PC-9 (cell line): ENCODE measurements at regions of chr16 and their contacts with region 1.

Region 1: DNA sequence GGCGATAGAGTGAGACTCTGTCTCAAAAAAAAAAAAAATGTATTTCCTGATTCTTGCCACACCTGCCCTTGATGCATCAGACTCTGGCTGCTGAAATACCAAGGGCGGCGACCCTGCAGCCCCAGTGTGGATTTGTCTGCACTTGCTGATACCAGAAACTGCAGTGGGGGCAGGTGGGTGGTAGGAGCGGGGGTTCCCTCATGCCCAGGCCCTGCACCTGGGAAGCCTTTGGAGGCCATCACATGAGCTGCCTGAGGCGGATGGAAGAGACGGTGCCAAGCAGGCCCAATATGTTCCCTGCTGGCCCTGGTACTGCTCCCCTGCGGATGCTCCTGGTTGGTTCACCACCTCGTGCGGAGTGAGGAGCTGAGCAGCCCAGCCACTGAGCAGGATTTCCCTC is 50.6 kb downstream of the MARF1 start:
- DNase-seq: peak in 1 of 2 experiments; percentile 40
- H3K4me3 ChIP-seq: no peak overlapping the region
- H3K27ac ChIP-seq: peak overlapping the region; percentile 99
- H3K4me1 ChIP-seq: peaks cover 43% of the 10 kb centered on the region
- H3K27me3 ChIP-seq: no peaks in the 10 kb centered on the region
- CTCF ChIP-seq: no peak

Region 2: GRCh38 chr16:15482068-15482747 is 110.1 kb before region 1 on chr16:
- CTCF ChIA-PET with region 1: interaction called, 3 read pairs
- POLR2A ChIA-PET with region 1: no interaction called
- intact Hi-C with region 1: loop called (anchors 2 kb)
- DNase-seq: peak; percentile 89 to 98
- H3K4me3 ChIP-seq: no peak overlapping the region
- H3K27ac ChIP-seq: peak overlapping the region; percentile 69
- H3K4me1 ChIP-seq: peaks cover 35% of the 10 kb centered on the region
- H3K27me3 ChIP-seq: no peaks in the 10 kb centered on the region
- CTCF ChIP-seq: no peak; the same call in 1 of the 2 replicates

Region 3: DNA sequence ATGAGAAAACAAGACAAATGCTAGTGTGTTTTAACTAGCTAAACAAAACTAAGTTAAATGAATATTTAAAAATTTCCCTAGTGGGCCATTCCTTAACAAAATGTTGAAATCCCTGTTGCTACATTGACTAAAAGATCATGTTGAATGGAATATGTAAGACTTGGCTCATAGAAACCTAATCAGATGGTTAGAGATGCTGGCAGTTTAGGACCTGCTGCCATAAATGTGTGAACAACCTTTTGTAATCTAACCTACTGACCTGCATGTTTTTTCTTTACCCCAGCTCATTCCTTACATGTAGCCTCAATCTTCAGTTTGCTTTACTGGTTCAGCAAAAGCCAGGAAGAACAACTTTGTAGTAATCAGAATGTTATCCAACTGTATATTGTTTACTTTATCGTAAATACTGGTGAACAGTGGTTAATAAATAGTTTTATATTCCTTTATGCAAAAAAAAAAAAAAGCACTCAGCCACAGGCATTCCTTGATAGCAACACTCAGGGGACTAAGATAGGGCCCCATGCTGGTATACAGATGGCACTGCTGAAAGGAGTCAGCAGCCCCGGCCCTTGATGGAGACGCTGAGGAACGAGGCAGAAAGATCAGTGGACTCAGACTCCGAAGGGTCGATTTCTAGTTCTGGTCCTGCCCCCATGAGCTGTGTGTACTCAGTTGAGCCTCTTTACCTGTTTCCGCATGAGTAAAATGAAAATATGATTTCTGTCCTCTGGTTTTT is 27.6 kb before region 1 on chr16:
- CTCF ChIA-PET with region 1: no interaction called
- POLR2A ChIA-PET with region 1: no interaction called
- intact Hi-C with region 1: no loop called
- DNase-seq: no peak
- H3K4me3 ChIP-seq: no peak overlapping the region
- H3K27ac ChIP-seq: no peak overlapping the region
- H3K4me1 ChIP-seq: no peaks in the 10 kb centered on the region
- H3K27me3 ChIP-seq: no peaks in the 10 kb centered on the region
- CTCF ChIP-seq: no peak

Region 4: GRCh38 chr16:15613676-15614075 is 21.4 kb after region 1 on chr16:
- CTCF ChIA-PET with region 1: no interaction called
- POLR2A ChIA-PET with region 1: interaction called, 6 read pairs
- intact Hi-C with region 1: loop called (anchors 2 kb)
- DNase-seq: peak; percentile 60 to 91
- H3K4me3 ChIP-seq: peak overlapping the region; percentile 45; the same call in 1 of the 2 replicates
- H3K27ac ChIP-seq: peak overlapping the region; percentile 98
- H3K4me1 ChIP-seq: peaks cover 37% of the 10 kb centered on the region
- H3K27me3 ChIP-seq: no peaks in the 10 kb centered on the region
- CTCF ChIP-seq: no peak

Region 5: GRCh38 chr16:15643048-15643945 is 51.0 kb after region 1 on chr16 and contains the start of gene MARF1:
- CTCF ChIA-PET with region 1: interaction called, 5 read pairs
- POLR2A ChIA-PET with region 1: interaction called, 3 read pairs
- intact Hi-C with region 1: loop called (anchors 2 kb)
- DNase-seq: peak; percentile 83 to 99
- H3K4me3 ChIP-seq: peak within 1 kb of the TSS; percentile 75
- H3K27ac ChIP-seq: peak within 1 kb of the TSS; percentile 97
- H3K4me1 ChIP-seq: peaks cover 33% of the 10 kb centered on the region
- H3K27me3 ChIP-seq: no peaks in the 10 kb centered on the region
- CTCF ChIP-seq: peak; percentile 60; the same call in 1 of the 2 replicates
- total RNA-seq, gene MARF1: 68.1 and 69.4 TPM in 2 replicates

Region 6: DNA sequence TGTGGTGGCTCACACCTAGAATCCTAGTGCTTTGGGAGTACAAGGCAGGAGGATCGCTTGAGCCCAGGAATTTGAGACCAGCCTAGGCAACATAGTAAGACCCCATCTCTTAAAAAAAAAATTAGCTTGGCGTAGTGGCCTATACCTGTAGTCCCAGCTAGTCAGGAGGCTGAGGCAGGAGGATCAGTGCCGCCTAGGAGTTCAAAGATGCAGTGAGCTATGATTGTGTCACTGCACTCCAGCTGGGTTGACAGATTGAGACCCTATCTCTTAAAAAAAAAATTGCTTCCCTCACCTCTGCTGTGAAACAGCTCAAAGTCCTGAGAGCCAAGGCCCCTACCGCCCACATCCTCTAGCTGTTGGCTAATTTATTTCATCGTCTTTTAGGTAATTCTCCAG is 67.9 kb after region 1 on chr16:
- CTCF ChIA-PET with region 1: no interaction called
- POLR2A ChIA-PET with region 1: interaction called, 20 read pairs
- intact Hi-C with region 1: no loop called
- DNase-seq: no peak
- H3K4me3 ChIP-seq: no peak overlapping the region
- H3K27ac ChIP-seq: no peak overlapping the region
- H3K4me1 ChIP-seq: no peaks in the 10 kb centered on the region
- H3K27me3 ChIP-seq: no peaks in the 10 kb centered on the region
- CTCF ChIP-seq: no peak

Region 7: GRCh38 chr16:15732416-15732815 is 140.1 kb after region 1 on chr16:
- CTCF ChIA-PET with region 1: no interaction called
- POLR2A ChIA-PET with region 1: no interaction called
- intact Hi-C with region 1: no loop called
- DNase-seq: no peak
- H3K4me3 ChIP-seq: no peak overlapping the region
- H3K27ac ChIP-seq: no peak overlapping the region
- H3K4me1 ChIP-seq: no peaks in the 10 kb centered on the region
- H3K27me3 ChIP-seq: no peaks in the 10 kb centered on the region
- CTCF ChIP-seq: no peak

Region 8: DNA sequence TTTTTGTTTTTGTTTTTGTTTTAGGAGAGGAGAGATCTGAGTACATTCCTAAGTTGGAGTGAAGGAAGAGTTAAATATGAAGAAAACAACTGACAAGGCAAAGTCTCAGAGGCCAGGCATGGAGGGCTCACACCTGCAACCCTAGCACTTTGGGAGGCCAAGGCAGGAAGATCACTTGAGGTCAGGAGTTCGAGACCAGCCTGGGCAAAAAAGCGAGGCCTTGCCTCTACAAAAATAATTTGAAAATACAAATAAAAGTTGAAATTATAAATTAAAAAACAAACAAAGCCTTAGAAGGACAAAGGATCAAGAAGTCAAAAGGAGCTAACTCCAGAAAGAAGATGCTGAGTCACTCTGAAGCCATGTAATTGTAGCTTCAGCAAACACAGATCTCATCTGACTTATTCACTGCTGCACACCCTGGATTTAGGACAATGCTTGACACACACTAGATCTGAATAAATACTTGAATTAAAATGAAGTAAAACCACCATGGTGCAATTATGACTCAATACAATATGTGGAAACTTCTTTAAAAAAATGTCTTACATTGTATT is 287.0 kb after region 1 on chr16:
- CTCF ChIA-PET with region 1: no interaction called
- POLR2A ChIA-PET with region 1: no interaction called
- intact Hi-C with region 1: no loop called
- DNase-seq: peak; percentile 44 to 96
- H3K4me3 ChIP-seq: no peak overlapping the region
- H3K27ac ChIP-seq: peak overlapping the region; percentile 96
- H3K4me1 ChIP-seq: peaks cover 42% of the 10 kb centered on the region
- H3K27me3 ChIP-seq: no peaks in the 10 kb centered on the region
- CTCF ChIP-seq: 0 out of 2 replicates have a peak, but pooled peaks have one; percentile 14